Aorta (tissue), 5 donors: ENCODE measurements at regions of chr9 and their contacts with region 1.

Region 1: DNA sequence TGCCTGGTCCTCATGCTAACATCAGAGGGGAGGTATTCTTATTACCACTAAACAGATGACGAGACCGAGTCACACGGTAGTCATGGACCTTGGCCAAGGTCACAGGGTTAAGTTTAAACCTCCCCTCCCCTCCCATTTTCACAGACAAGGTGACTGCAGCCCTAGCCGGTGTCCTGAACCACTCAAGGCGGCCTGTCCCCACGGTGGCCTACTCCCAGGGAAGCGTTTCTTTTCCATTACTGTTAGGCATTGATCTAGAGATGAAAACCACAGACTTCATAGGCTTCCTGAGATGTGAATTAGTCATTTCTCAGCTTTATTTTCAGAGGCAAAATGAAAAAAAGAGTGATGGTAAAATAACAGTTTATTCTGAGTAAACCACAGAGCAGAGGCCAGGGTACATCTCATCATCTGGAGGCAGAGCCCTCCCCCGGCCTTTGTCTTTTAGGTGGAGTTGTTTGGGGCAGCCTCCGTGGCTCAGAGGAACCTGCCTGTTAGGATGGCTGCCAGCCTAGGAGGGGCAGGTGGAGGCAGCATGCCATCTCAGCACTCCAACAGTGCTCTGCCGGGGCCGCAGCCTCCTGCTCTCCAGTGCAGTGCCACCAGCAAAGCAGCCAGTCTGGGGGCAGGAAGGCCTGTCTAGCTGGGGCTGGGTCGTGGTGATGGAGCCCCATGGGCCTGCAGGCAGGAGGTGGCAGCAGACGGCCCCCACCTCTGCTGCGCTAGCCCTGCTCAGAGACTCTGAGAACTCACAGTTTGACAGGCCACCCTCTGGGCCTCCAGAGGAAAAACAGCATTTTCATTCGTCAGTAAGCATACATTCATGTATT is 71.2 kb downstream of the RAPGEF1 start:
- DNase-seq: no peak
- ATAC-seq: peak; percentile 21
- H3K4me3 ChIP-seq: no peak overlapping the region
- H3K27ac ChIP-seq: peak overlapping the region in 1 of 2 donors; percentile 80
- H3K4me1 ChIP-seq: peaks cover 0 to 5% of the 10 kb centered on the region in 2 donors
- H3K27me3 ChIP-seq: no peaks in the 10 kb centered on the region

Region 2: DNA sequence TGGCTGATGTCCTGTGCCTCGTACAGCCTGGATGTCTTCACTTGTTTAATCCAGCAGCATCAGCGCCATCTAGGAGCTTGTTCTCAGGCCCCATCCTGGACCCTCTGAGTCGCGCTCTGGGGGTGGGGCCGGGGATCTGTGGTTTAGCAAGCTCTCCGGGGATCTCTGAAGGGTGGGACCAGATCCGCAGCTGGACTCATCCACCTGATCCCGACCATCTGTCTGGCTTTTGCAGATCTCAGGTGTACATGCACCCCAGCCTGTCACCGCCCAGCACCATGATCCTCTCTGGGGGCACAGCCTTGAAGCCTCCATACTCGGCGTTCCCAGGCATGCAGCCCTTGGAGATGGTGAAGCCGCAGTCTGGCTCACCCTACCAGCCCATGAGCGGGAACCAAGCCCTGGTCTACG is 181.0 kb before region 1 on chr9:
- intact Hi-C with region 1: no loop called
- DNase-seq: peak in 1 of 2 donors; percentile 50
- ATAC-seq: no peak
- H3K4me3 ChIP-seq: no peak overlapping the region
- H3K27ac ChIP-seq: no peak overlapping the region
- H3K4me1 ChIP-seq: no peaks in the 10 kb centered on the region
- H3K27me3 ChIP-seq: no peaks in the 10 kb centered on the region

Region 3: DNA sequence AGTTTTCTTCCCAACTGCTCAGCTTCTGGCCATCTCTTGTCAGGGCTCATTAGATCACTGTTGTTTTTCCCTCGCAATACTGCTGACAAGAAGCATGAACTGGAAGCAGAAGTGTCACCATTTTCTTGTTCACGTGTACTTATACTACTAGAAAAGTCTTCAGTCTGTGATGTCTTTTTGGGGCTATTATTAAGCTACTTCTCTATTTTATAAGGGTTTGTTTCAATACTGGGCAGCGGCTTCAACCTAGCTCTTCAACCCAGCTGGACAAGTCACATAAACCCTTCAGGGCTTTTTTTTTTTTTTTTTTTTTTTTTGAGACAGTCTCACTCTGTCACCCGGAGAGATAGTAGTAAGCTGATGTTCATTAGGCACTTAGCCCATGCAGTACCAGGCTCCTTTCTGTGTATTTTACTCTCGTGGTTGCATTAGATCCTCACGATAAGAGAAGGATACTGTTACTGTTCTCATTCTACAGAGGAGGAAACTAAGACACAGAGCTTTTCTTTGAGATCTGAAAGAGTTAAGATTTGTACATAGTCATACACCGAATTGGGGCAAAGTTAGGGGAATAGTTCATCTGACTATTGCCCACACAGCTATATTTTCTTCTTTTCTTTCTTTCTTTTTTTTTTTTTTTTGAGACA is 50.7 kb after region 1 on chr9:
- intact Hi-C with region 1: loop called in 1 of 2 experiments (anchors 5 kb)
- DNase-seq: no peak
- ATAC-seq: no peak
- H3K4me3 ChIP-seq: no peak overlapping the region
- H3K27ac ChIP-seq: no peak overlapping the region
- H3K4me1 ChIP-seq: no peaks in the 10 kb centered on the region
- H3K27me3 ChIP-seq: no peaks in the 10 kb centered on the region